BJ (cell line): ENCODE measurements at regions of chr2 and their contacts with region 1.

Region 1: GRCh38 chr2:131104487-131105155 is 515 bp upstream of the PLEKHB2 start:
- DNase-seq: no peak
- H3K4me3 ChIP-seq: peak overlapping the region; percentile 60
- H3K27me3 ChIP-seq: no peaks in the 10 kb centered on the region
- CTCF ChIP-seq: no peak

Region 2: DNA sequence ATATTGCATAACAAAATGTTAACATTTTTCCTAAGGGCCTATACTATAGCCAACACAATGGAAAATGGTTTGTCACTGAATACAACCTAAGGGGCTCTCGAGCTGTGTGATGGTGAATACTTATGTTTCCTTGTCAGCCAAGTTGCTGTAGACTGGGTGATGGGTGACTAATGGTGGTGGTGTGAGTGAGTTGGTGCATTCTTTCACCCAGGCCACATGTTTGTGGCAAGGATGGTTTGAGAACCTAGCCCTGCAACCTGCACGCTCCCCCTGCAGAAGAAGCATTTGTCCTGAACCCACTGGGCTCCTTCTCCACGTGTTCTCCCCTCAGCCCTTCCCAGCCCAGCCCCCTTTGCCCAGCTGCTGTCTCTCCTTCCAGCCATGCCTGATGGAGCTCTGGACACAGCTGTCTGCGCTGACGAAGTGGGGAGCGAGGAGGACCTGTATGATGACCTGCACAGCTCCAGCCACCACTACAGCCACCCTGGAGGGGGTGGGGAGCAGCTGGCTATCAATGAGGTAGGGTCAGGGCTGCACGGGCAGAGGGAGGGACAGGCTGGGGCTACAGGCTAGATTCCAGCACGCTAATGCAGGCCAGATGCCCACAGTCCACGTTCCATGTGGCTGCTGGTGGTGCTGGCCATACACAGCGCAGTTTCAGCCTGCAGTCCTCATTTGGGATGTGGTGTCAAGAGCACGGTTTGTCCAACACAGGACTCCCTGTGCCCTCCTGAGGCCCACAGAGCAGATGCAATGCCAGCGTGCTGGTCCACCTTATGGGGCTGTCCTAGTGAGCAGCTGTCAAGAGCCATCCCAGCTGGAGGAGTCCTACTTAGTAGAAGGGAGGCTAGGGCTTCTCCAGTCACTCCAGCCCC is 76.8 kb before region 1 on chr2:
- CTCF ChIA-PET with region 1: no interaction called
- POLR2A ChIA-PET with region 1: interaction called, 12 read pairs
- DNase-seq: no peak
- H3K4me3 ChIP-seq: no peak overlapping the region
- H3K27me3 ChIP-seq: peaks cover 2% of the 10 kb centered on the region; the same call in 1 of the 2 replicates
- CTCF ChIP-seq: no peak

Region 3: GRCh38 chr2:131535526-131535925 is 430.9 kb after region 1 on chr2:
- CTCF ChIA-PET with region 1: no interaction called
- POLR2A ChIA-PET with region 1: no interaction called
- DNase-seq: no peak
- H3K4me3 ChIP-seq: no peak overlapping the region
- H3K27me3 ChIP-seq: no peaks in the 10 kb centered on the region
- CTCF ChIP-seq: no peak